ENCODE measurements at regions of chr12 and their contacts with region 1.

Region 1: GRCh38 chr12:68821357-68822188 is 13.6 kb downstream of the MDM2 start:
- DNase-seq: no peak
- H3K4me3 ChIP-seq: no peak overlapping the region
- H3K4me3 Mint-ChIP-seq: no peak overlapping the region
- H3K27ac ChIP-seq: peak overlapping the region in 1 of 2 donors; percentile 22
- H3K27ac Mint-ChIP-seq: peak overlapping the region in 4 of 7 donors; percentile 19 to 87 (median 68)
- H3K4me1 ChIP-seq: no peaks in the 10 kb centered on the region
- H3K4me1 Mint-ChIP-seq: peaks cover 7% of the 10 kb centered on the region
- H3K27me3 ChIP-seq: no peaks in the 10 kb centered on the region
- H3K27me3 Mint-ChIP-seq: no peaks in the 10 kb centered on the region
- CTCF ChIP-seq: no peak

Region 2: GRCh38 chr12:68772714-68773113 is 48.9 kb before region 1 on chr12:
- intact Hi-C with region 1: loop called in 1 of 2 experiments (anchors 10 kb)
- DNase-seq: no peak
- H3K4me3 ChIP-seq: no peak overlapping the region
- H3K4me3 Mint-ChIP-seq: peak overlapping the region; percentile 5 to 35
- H3K27ac ChIP-seq: no peak overlapping the region
- H3K27ac Mint-ChIP-seq: peak overlapping the region in 1 of 7 donors; percentile 19
- H3K4me1 ChIP-seq: no peaks in the 10 kb centered on the region
- H3K4me1 Mint-ChIP-seq: peaks cover 8% of the 10 kb centered on the region
- H3K27me3 ChIP-seq: no peaks in the 10 kb centered on the region
- H3K27me3 Mint-ChIP-seq: peaks cover 0 to 2% (median 0%) of the 10 kb centered on the region in 3 donors
- CTCF ChIP-seq: no peak

Region 3: GRCh38 chr12:70059373-70059772 is 1237.8 kb after region 1 on chr12:
- intact Hi-C with region 1: no loop called
- DNase-seq: no peak
- H3K4me3 ChIP-seq: no peak overlapping the region
- H3K4me3 Mint-ChIP-seq: no peak overlapping the region
- H3K27ac ChIP-seq: no peak overlapping the region
- H3K27ac Mint-ChIP-seq: no peak overlapping the region
- H3K4me1 ChIP-seq: peaks cover 3 to 4% of the 10 kb centered on the region in 2 donors
- H3K4me1 Mint-ChIP-seq: peaks cover 4% of the 10 kb centered on the region
- H3K27me3 ChIP-seq: no peaks in the 10 kb centered on the region
- H3K27me3 Mint-ChIP-seq: peaks cover under 1 to 8% (median 2%) of the 10 kb centered on the region in 3 donors
- CTCF ChIP-seq: no peak

Measured in CD14-positive monocyte (primary cell).